SK-MEL-5 (cell line): ENCODE measurements at regions of chr10 and their contacts with region 1.

Region 1: GRCh38 chr10:5971315-5971832 is 6.0 kb downstream of the IL15RA start:
- DNase-seq: no peak

Region 2: GRCh38 chr10:6088721-6089390 is 117.5 kb after region 1 on chr10 and contains the start of gene RBM17:
- in situ Hi-C with region 1: loop called (anchors 25 kb)
- DNase-seq: peak; percentile 87
- total RNA-seq, gene RBM17: 19.0 and 23.1 TPM in 2 replicates